HepG2 (cell line): ENCODE measurements at regions of chr13 and their contacts with region 1.

Region 1: DNA sequence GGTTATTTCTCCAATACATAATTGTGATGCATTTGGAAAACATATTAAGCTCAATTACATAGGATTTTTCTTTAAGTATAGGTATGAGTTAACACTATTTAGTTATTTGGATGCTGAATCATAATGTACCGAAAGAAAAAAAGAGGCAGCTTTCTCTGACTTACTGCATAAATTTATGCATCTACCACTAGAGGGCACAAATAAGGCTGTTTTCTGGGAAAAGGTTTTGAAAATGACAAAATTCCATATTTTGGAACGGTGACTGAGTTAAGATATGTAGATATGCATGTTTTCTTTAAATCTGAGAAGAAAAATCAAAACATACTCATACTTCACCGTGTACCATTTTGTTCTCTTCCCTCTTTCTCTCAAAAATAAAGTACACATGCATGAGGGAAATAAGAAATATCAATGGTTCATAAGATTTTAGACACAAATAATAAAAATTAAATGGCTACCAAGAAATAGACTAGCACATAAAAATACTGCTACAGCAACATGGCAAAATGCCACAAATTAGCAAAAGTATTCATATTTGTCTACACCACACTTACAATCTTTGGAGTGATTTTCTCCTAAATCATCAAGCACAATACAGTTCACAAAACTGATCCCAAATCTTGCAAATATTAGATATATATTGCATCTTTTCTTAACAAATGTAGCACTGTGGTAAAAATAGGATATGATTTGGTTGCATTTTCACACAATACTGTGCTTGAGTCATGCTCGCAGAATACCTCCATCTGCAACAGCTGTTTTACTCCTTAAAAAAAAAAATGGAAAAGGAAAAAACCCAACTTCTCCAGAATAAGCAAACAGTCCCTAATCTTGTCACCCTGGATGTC is 260.0 kb downstream of the FGF14 start:
- DNase-seq: peak; percentile 4
- ATAC-seq: no peak
- H3K4me3 ChIP-seq: no peak overlapping the region
- H3K27ac ChIP-seq: no peak overlapping the region
- H3K4me1 ChIP-seq: no peaks in the 10 kb centered on the region
- H3K27me3 ChIP-seq: no peaks in the 10 kb centered on the region
- CTCF ChIP-seq: peak; percentile 53
- EP300 ChIP-seq: no peak
- POLR2A ChIP-seq: no peak
- RAD21 ChIP-seq: no peak

Region 2: DNA sequence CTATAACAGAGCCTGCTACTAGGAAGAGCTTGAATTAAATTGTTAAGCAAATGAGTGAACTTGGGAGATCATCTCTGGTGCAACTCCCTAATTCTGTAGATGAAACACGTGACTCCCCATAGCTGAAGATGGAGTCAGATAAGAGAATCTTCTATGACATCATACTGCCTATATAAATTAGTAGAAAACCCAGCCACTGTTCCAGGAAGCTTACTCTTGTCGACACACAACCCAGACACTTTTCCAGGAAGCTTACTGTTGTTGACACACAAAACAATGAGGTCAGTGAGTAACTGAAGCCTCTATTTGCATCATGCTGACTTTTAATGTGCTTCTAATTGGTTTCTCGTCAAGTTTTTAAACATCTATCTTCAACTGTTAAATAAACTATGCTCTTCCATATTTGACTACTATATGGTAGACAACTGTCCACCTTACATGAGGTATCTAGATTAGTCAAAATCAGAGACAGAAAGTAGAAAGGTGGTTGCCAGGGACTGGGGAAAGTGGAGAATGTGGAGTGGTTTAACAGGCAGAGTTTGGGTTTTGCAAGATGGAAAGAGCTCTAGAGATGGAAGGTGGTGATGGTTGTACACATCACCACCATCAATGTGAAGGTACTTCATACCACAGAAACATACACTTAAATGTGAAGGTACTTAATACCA is 91.8 kb after region 1 on chr13:
- CTCF ChIA-PET with region 1: no interaction called
- POLR2A ChIA-PET with region 1: no interaction called
- in situ Hi-C with region 1: no loop called
- intact Hi-C with region 1: no loop called
- DNase-seq: no peak
- ATAC-seq: no peak
- H3K4me3 ChIP-seq: no peak overlapping the region
- H3K27ac ChIP-seq: no peak overlapping the region
- H3K4me1 ChIP-seq: peaks cover 22% of the 10 kb centered on the region
- H3K27me3 ChIP-seq: no peaks in the 10 kb centered on the region
- CTCF ChIP-seq: no peak
- EP300 ChIP-seq: no peak
- POLR2A ChIP-seq: no peak
- RAD21 ChIP-seq: no peak

Region 3: GRCh38 chr13:102460801-102461200 is 319.0 kb after region 1 on chr13:
- CTCF ChIA-PET with region 1: interaction called, 9 read pairs
- POLR2A ChIA-PET with region 1: no interaction called
- in situ Hi-C with region 1: no loop called
- intact Hi-C with region 1: loop called (anchors 2 kb)
- DNase-seq: no peak
- ATAC-seq: no peak
- H3K4me3 ChIP-seq: no peak overlapping the region
- H3K27ac ChIP-seq: no peak overlapping the region
- H3K4me1 ChIP-seq: 0 out of 2 replicates have a peak, but pooled peaks cover 6% of the 10 kb centered on the region
- H3K27me3 ChIP-seq: peaks cover 0 to 4% of the 10 kb centered on the region in 2 experiments; a peak in 1 of 5 replicates
- CTCF ChIP-seq: no peak
- EP300 ChIP-seq: no peak
- POLR2A ChIP-seq: no peak
- RAD21 ChIP-seq: no peak

Region 4: GRCh38 chr13:102571075-102571474 is 429.2 kb after region 1 on chr13:
- CTCF ChIA-PET with region 1: no interaction called
- POLR2A ChIA-PET with region 1: no interaction called
- in situ Hi-C with region 1: loop called (anchors 25 kb)
- intact Hi-C with region 1: loop called (anchors 5 kb)
- DNase-seq: peak; percentile 6
- ATAC-seq: peak; percentile 78
- H3K4me3 ChIP-seq: no peak overlapping the region
- H3K27ac ChIP-seq: no peak overlapping the region
- H3K4me1 ChIP-seq: no peaks in the 10 kb centered on the region
- H3K27me3 ChIP-seq: peaks cover 1 to 6% of the 10 kb centered on the region in 2 experiments; a peak in 1 of 5 replicates
- CTCF ChIP-seq: peak; percentile 47
- EP300 ChIP-seq: no peak
- POLR2A ChIP-seq: no peak
- RAD21 ChIP-seq: no peak